ENCODE measurements at regions of chr6 and their contacts with region 1.

Region 1: DNA sequence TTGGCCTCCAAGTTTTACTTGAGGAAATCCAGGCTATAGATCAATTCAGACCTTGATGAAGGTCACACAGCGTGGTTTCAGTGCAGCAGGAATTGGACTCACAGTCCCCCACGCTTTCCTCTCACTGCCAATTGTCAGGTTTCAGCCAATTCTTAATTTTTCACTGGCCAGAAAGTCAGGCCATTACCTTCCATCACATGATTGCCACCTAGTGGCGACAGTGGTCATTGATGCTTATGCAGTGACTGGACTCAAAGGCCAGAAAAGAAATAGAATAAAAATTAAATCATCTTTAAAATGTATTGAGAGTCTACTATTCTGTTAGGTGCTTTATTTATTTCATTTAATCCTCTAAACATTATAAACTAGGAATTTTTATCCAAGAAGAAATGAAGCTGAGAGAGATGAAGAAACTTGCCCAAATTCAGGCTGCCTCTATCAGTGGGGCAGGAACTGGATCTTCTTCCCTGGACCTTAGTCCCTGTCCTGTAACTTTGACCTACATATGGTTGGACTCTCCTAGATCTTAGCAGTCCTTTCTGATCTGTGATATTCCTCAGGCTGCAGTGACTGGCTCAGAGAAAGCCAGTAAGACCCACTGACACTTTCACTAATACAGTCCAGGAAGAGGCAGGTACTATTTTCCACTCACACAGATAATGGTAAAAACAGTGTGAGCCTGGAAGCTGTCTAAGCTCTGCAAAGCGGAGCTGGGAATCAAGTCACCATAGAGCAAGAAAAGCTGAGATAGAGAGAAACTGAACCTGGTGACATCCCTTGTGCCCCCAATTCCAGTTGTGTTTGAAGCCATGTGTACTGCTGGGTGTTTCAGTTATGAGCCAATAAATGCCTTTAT is 133.3 kb downstream of the ELOVL4 start:
- DNase-seq: peak; percentile 40
- H3K4me3 ChIP-seq: no peak overlapping the region
- H3K27ac ChIP-seq: no peak overlapping the region
- H3K4me1 ChIP-seq: no peaks in the 10 kb centered on the region
- H3K27me3 ChIP-seq: no peaks in the 10 kb centered on the region
- CTCF ChIP-seq: peak; percentile 87 to 88

Region 2: GRCh38 chr6:79762370-79762769 is 51.7 kb before region 1 on chr6:
- CTCF ChIA-PET with region 1: no interaction called
- dilution Hi-C with region 1: no loop called
- in situ Hi-C with region 1: no loop called
- intact Hi-C with region 1: no loop called
- DNase-seq: no peak
- H3K4me3 ChIP-seq: no peak overlapping the region
- H3K27ac ChIP-seq: no peak overlapping the region
- H3K4me1 ChIP-seq: no peaks in the 10 kb centered on the region
- H3K27me3 ChIP-seq: peaks cover 2% of the 10 kb centered on the region
- CTCF ChIP-seq: peak; percentile 29 to 44

Region 3: DNA sequence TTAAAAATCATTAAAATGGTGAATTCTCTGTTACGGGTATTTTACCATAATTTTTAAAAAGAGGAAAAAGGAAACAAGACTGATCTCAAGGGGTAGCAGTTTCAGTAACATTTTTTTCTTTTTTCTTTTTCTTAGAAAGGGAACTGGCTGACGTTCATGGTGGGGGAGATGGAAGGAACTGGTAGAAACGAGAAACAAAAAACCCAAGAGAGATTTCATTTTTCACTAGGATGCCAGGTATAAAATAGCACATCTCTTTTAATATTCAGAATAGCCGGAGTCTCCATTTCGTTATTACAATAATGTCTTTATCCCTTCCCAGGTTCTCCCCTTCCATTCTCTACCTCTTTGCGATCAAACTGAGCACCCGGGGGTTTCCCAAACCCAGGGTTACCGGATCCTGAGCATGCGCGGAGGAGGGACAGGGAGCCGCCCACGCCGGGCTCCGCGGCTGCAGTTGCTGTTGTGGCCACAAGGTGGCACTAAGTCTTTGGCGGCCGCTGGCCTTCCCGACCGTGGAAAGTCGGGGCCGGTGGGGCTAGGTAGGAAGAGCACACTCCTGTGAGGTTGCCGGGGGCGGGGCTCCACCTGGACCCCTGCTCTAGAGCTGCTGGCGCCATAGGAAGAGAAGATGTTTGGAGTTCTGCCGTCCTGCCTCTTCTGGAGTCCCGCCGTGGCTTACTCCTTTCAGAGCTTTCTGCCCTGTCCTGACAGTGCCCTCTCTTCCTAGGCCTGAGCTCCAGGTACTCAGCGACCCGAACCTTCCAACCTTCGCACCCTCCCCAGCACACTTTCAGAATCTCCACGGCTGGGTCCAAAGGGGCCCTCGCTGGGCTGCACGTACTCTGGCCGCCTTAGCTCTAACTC is 36.1 kb before region 1 on chr6:
- CTCF ChIA-PET with region 1: no interaction called
- dilution Hi-C with region 1: no loop called
- in situ Hi-C with region 1: no loop called
- intact Hi-C with region 1: loop called (anchors 1 kb)
- DNase-seq: peak; percentile 70
- H3K4me3 ChIP-seq: peak overlapping the region; percentile 20 to 26 (median 23)
- H3K27ac ChIP-seq: no peak overlapping the region
- H3K4me1 ChIP-seq: no peaks in the 10 kb centered on the region
- H3K27me3 ChIP-seq: no peaks in the 10 kb centered on the region
- CTCF ChIP-seq: peak; percentile 95 to 97

Region 4: GRCh38 chr6:79861023-79861422 is 46.9 kb after region 1 on chr6:
- CTCF ChIA-PET with region 1: no interaction called
- dilution Hi-C with region 1: no loop called
- in situ Hi-C with region 1: no loop called
- intact Hi-C with region 1: no loop called
- DNase-seq: no peak
- H3K4me3 ChIP-seq: no peak overlapping the region
- H3K27ac ChIP-seq: no peak overlapping the region
- H3K4me1 ChIP-seq: no peaks in the 10 kb centered on the region
- H3K27me3 ChIP-seq: no peaks in the 10 kb centered on the region
- CTCF ChIP-seq: no peak

Measured in mammary epithelial cell (primary cell).